ENCODE measurements at regions of chr1 and their contacts with region 1.

Region 1: GRCh38 chr1:227318003-227318852 is at the start of gene CDC42BPA:
- DNase-seq: peak; percentile 72 to 89 (median 84)
- H3K4me3 ChIP-seq: peak within 1 kb of the TSS; percentile 57 to 94 (median 84)
- H3K27ac ChIP-seq: peak within 1 kb of the TSS; percentile 90 to 99 (median 98)
- H3K27me3 ChIP-seq: no peaks in the 10 kb centered on the region
- CTCF ChIP-seq: peak in 3 of 56 donors; percentile 10 to 14 (median 12)
- total RNA-seq, gene CDC42BPA: 97.5 to 158 (median 125) TPM

Region 2: GRCh38 chr1:226940029-226940805 is 378.0 kb before region 1 on chr1 and contains the start of gene COQ8A:
- intact Hi-C with region 1: loop called in 1 of 2 experiments (anchors 5 kb)
- DNase-seq: peak; percentile 98 to 100 (median 99)
- H3K4me3 ChIP-seq: peak within 1 kb of the TSS; percentile 63 to 100 (median 91)
- H3K27ac ChIP-seq: peak within 1 kb of the TSS; percentile 88 to 100 (median 99)
- H3K27me3 ChIP-seq: no peaks in the 10 kb centered on the region
- CTCF ChIP-seq: peak in 16 of 56 donors; percentile 4 to 41 (median 21)
- total RNA-seq, gene COQ8A: 27.2 to 59.8 (median 44.7) TPM

Region 3: DNA sequence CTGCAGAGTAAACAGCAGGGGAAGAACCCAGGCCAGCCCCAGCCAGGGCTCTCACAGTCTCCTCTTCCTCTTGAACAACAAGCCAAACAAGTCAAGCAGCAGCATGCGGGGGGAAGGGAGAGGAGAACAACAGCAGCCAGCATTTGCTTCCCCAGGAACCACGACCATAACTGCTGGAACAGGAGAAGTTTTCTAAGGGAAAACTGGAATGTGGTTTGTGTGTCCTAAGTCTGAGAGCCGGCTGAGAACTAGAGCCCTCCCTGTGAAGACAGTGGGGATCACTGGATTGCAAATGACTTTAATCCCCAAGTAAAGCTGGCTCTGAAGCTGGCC is 329.9 kb before region 1 on chr1:
- intact Hi-C with region 1: loop called in 1 of 2 experiments (anchors 5 kb)
- DNase-seq: no peak
- H3K4me3 ChIP-seq: no peak overlapping the region
- H3K27ac ChIP-seq: peak overlapping the region in 57 of 59 donors; percentile 34 to 94 (median 87)
- H3K27me3 ChIP-seq: no peaks in the 10 kb centered on the region
- CTCF ChIP-seq: no peak

Region 4: GRCh38 chr1:227234998-227235405 is 83.2 kb before region 1 on chr1:
- intact Hi-C with region 1: loop called (anchors 10 kb)
- DNase-seq: no peak
- H3K4me3 ChIP-seq: no peak overlapping the region
- H3K27ac ChIP-seq: peak overlapping the region in 2 of 59 donors; percentile 1 to 14
- H3K27me3 ChIP-seq: no peaks in the 10 kb centered on the region
- CTCF ChIP-seq: peak in 55 of 56 donors; percentile 27 to 74 (median 56)

Region 5: DNA sequence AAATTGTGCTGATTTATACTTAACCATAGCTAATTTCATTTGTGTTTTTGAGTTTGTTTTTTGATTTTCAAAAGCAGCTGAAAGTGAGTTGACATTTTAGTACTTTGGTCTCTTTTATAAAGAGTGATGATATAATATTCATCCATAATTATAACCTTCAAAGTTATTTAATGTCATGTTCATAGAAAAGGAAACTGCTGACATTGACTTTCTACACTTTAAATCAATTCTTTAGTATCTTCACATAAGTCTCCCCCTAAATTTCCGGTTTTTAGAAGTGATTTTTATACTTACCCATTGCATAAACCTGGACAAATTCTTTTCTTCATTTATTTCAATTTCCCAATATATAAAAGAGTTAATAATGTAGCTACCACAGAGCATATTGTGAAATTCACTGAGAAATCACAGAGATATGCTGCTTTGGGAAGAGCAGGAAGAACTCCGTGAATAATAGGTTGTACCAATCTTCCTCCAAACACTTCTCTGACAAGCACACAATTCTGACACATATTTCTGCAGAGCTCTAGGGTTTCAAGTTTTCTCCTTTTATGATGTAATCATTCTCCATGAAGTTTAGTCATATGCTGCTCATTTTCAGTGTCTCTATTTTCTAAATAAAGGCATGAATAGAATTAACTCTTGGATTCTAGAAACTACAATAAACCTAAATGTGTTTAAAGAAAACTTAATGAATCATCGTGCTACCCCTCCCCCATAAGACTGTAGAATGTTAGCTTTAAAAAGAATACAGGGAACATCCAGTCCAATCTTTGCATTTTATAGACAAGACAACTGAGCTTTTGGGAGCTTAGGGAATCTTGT is 25.7 kb after region 1 on chr1:
- intact Hi-C with region 1: no loop called
- DNase-seq: no peak
- H3K4me3 ChIP-seq: no peak overlapping the region
- H3K27ac ChIP-seq: peak overlapping the region in 8 of 59 donors; percentile 1 to 40 (median 14)
- H3K27me3 ChIP-seq: no peaks in the 10 kb centered on the region
- CTCF ChIP-seq: no peak

Region 6: GRCh38 chr1:227428803-227429202 is 110.6 kb after region 1 on chr1:
- intact Hi-C with region 1: loop called (anchors 1 to 2 kb)
- DNase-seq: no peak
- H3K4me3 ChIP-seq: no peak overlapping the region
- H3K27ac ChIP-seq: peak overlapping the region in 58 of 59 donors; percentile 34 to 100 (median 96)
- H3K27me3 ChIP-seq: no peaks in the 10 kb centered on the region
- CTCF ChIP-seq: no peak